Naive thymus-derived CD4-positive, alpha-beta T cell (primary cell): ENCODE measurements at regions of chrX and their contacts with region 1.

Region 1: DNA sequence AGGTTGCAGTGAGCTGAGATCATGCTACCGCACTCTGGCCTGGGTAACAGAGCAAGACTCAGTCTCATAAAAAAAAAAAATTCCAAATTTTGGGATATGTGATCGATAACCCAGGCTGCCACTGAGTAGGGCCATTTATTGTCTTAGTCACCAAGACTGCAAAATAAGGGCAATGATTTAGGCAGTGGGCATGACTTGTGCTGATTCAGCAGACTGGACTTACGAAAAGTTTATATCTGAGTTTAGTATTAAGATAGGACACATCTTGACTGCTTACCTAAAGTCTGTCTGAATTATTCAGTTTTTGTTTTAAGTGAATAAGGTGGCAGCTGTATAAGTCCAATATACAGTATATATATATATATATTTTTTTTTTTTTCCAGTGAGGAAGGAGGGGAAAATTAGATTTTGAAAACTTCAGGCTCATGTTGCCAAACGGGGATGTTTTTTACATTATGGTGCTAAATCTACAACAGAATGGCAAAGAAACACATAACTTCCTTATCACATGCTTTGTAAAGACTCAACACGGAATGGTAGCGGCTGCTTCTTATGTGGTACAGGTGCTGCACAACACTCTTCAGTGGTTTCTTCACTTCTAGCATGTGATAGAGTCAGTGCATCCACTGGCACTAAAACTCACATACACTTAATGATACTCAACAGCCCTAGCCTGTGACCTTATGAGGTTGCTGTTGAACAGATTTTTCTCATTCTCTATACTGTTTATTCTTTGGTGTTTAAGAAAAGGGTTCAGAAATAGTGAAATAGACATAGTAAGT is 6.5 kb downstream of the TEX13D start:
- DNase-seq: peak in 7 of 9 donors; percentile 34 to 70 (median 49)
- ATAC-seq: peak; percentile 86
- H3K4me3 ChIP-seq: no peak overlapping the region
- H3K4me3 Mint-ChIP-seq: peak overlapping the region in 2 of 10 donors; percentile 6 to 27
- H3K27ac ChIP-seq: no peak overlapping the region
- H3K27ac Mint-ChIP-seq: peak overlapping the region in 8 of 9 donors; percentile 54 to 88 (median 78)
- H3K4me1 ChIP-seq: peaks cover 38 to 51% of the 10 kb centered on the region in 2 donors
- H3K4me1 Mint-ChIP-seq: peaks cover 8 to 58% (median 42%) of the 10 kb centered on the region in 7 donors
- H3K27me3 ChIP-seq: no peaks in the 10 kb centered on the region
- H3K27me3 Mint-ChIP-seq: no peaks in the 10 kb centered on the region

Region 2: DNA sequence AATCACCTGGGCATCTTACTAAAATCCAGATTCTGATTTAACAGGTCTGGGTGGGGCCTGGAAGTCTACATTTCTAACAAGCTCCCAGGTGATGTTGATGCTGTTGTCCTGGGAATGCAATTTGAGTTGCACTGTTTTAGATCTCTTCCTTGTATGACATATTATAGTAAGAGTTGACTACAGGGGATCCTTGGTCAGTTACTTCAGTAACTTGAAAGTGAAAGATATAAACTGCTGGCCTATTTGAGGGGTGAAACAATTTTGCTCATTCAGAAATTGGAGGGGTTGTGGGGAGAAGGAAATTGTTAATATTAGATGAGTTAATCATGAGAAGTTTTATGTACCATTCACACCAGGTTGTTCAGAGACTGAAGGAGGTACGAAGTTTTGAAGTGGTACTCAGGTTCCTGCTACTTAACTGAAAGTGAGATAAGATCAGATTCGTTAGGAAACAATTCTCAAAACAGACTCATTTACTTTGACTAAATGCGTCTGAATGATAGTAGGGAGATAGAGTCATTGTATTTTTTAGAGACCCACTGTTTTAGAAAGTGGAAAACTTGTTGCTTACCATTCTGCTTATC is 20.0 kb after region 1 on chrX:
- CTCF ChIA-PET with region 1: no interaction called
- POLR2A ChIA-PET with region 1: interaction called, 4 read pairs
- intact Hi-C with region 1: loop called (anchors 2 kb)
- DNase-seq: peak in 6 of 9 donors; percentile 27 to 56 (median 36)
- ATAC-seq: peak; percentile 71
- H3K4me3 ChIP-seq: peak overlapping the region; percentile 43
- H3K4me3 Mint-ChIP-seq: peak overlapping the region; percentile 12 to 84 (median 58)
- H3K27ac ChIP-seq: peak overlapping the region; percentile 37
- H3K27ac Mint-ChIP-seq: peak overlapping the region; percentile 21 to 92 (median 70)
- H3K4me1 ChIP-seq: peaks cover 19 to 25% of the 10 kb centered on the region in 2 donors
- H3K4me1 Mint-ChIP-seq: peaks cover 29 to 66% (median 64%) of the 10 kb centered on the region in 7 donors
- H3K27me3 ChIP-seq: no peaks in the 10 kb centered on the region
- H3K27me3 Mint-ChIP-seq: no peaks in the 10 kb centered on the region